ENCODE measurements at regions of chr9 and their contacts with region 1.

Region 1: GRCh38 chr9:32378993-32379729 is 5.3 kb upstream of the ACO1 start:
- DNase-seq: no peak
- ATAC-seq: peak; percentile 66
- H3K4me3 Mint-ChIP-seq: peak overlapping the region; percentile 30
- H3K27ac Mint-ChIP-seq: no peak overlapping the region
- H3K4me1 Mint-ChIP-seq: peaks cover 15% of the 10 kb centered on the region
- H3K27me3 Mint-ChIP-seq: peaks cover 31% of the 10 kb centered on the region
- CTCF ChIP-seq: peak; percentile 52; the same call in 1 of the 2 replicates

Region 2: GRCh38 chr9:32218100-32218767 is 160.9 kb before region 1 on chr9:
- CTCF ChIA-PET with region 1: no interaction called
- POLR2A ChIA-PET with region 1: no interaction called
- DNase-seq: no peak
- ATAC-seq: no peak
- H3K4me3 Mint-ChIP-seq: no peak overlapping the region
- H3K27ac Mint-ChIP-seq: 0 out of 2 replicates have a peak overlapping the region, but pooled peaks have one; percentile 0
- H3K4me1 Mint-ChIP-seq: peaks cover 29% of the 10 kb centered on the region
- H3K27me3 Mint-ChIP-seq: no peaks in the 10 kb centered on the region; the same call in none of the 2 replicates
- CTCF ChIP-seq: no peak

Region 3: DNA sequence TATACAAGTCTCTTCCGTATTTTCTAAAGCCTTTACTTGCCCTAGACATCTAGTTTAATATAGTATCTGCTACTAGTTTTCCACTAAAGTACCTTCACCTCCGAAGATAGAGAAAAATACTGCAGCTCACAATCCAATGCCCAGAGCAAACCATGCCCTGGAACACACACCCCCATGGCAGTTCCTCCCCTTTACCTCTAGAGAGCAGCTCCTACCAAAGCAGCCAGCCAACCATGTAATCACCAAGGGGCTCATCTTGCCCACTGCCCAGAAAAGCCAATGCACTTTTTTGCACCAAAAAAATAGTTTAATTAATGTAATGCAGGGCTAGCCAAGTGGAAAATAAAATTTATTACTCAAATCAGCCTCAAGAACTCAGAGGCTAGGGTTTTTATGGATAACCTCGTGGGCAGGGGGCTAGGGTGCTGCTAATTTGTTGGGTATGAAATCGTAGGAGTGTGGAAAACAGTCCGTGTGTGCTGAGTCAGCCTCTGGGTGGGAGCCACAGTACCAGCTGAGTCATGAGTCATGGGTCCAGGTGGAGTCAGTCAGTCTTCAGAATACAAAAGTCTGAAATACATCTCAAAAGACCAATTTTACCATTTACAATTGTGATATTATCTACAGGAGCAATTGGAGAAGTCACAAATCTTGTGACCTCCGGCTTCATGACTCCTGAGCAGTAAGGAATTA is 114.8 kb before region 1 on chr9:
- CTCF ChIA-PET with region 1: interaction called, 27 read pairs
- POLR2A ChIA-PET with region 1: no interaction called
- DNase-seq: peak; percentile 38
- ATAC-seq: peak; percentile 100
- H3K4me3 Mint-ChIP-seq: no peak overlapping the region
- H3K27ac Mint-ChIP-seq: peak overlapping the region; percentile 68; the same call in 1 of the 2 replicates
- H3K4me1 Mint-ChIP-seq: peaks cover 13% of the 10 kb centered on the region
- H3K27me3 Mint-ChIP-seq: no peaks in the 10 kb centered on the region; the same call in 1 of the 2 replicates
- CTCF ChIP-seq: 0 out of 2 replicates have a peak, but pooled peaks have one; percentile 19

Region 4: DNA sequence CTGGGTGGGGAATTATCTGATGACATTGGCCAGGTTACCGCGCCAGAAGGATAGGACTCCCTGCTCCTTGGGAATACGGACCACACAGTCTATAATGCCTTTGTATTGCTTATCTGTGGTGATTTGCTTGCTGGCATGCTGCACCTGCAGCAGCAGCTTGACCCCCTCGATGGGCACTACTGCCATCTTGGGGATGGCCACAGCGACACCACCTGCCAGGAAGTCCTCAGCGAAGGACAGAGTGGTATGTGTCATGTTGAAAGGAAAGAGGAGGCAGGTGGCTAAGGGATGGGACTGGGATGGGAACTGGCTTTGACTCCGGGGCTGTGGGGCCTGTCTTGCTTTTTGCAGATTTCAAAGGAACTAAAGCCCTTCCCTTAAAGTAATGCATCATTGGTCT is 45.1 kb before region 1 on chr9:
- CTCF ChIA-PET with region 1: no interaction called
- POLR2A ChIA-PET with region 1: no interaction called
- DNase-seq: peak; percentile 15
- ATAC-seq: peak; percentile 52
- H3K4me3 Mint-ChIP-seq: no peak overlapping the region
- H3K27ac Mint-ChIP-seq: no peak overlapping the region
- H3K4me1 Mint-ChIP-seq: peaks cover 18% of the 10 kb centered on the region
- H3K27me3 Mint-ChIP-seq: no peaks in the 10 kb centered on the region
- CTCF ChIP-seq: no peak

Region 5: DNA sequence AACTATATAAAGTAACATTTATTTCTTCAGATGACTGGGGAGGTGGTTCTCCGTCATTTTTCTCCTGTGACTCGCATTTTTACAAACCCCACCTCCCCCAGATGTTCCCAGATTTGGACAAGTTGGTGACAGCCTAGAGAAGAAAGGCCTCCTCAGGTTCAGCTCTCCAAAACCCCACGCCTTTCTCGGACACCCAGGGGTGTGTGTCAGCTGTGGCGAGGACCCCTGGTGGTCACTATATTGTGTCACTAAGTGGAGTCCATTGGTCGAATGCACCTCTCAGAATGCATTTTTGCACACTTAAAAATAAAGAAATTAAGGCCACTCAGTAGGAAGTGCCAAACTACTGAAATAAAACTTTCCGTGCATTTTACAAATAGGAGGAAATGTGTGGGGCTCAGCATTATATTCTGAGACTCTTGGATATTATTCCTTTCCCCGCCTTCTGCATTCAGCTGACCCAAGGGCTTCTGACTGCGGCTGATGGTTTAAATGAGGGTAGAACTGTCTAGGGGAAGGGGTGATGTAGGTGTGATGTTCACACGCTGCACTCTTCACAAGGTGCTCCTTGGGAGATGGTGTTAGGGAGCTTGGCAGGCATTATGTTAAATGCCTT is 52.9 kb after region 1 on chr9:
- CTCF ChIA-PET with region 1: interaction called, 56 read pairs
- POLR2A ChIA-PET with region 1: no interaction called
- DNase-seq: peak; percentile 51
- ATAC-seq: peak; percentile 81
- H3K4me3 Mint-ChIP-seq: no peak overlapping the region
- H3K27ac Mint-ChIP-seq: no peak overlapping the region
- H3K4me1 Mint-ChIP-seq: no peaks in the 10 kb centered on the region
- H3K27me3 Mint-ChIP-seq: no peaks in the 10 kb centered on the region
- CTCF ChIP-seq: peak; percentile 65

Region 6: DNA sequence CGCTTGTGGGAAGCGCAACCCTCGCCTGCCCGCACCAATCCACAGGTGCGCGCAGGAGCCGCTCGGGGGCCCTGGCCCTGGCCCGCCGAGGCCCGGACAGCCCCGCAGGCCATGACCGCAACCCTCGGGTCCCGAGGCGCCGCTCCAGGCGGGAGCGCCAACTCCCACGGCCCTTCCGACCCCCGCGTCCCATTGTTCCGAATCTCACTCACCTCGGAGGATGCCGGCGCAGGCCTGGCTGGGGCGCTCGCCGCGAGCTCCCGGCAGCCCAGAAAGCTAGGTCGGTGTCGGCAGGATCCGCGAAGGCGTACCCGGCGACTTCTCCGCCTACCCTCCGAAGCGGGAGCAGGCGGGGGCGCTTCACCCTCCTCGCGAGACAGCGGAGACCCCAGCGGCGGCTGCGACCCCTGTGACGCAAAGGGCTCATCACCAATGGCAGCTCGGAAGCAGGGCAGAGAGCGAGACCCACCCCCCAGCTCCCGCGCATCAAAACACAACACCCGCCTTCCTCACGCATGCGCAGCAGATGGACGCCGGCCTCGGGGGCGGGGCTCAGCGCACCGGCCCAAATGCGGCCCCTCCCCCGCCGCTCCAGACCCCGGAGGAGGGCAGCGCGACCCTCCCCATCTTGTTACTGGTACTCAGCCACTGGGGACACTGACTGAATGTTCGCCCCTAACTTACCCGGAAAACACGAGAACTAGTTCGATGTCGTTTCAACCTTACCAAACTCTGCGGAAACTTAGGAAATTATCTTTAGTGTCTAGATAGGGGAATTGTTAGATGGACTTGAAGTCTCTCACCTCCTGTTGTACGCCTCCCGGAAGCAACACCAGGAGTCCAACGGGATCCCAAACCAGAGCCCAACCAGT is 171.6 kb after region 1 on chr9:
- CTCF ChIA-PET with region 1: interaction called, 49 read pairs
- POLR2A ChIA-PET with region 1: interaction called, 7 read pairs
- DNase-seq: peak; percentile 98
- ATAC-seq: peak; percentile 90
- H3K4me3 Mint-ChIP-seq: peak overlapping the region; percentile 91
- H3K27ac Mint-ChIP-seq: peak overlapping the region; percentile 98
- H3K4me1 Mint-ChIP-seq: peaks cover 24% of the 10 kb centered on the region
- H3K27me3 Mint-ChIP-seq: no peaks in the 10 kb centered on the region
- CTCF ChIP-seq: no peak

Region 7: DNA sequence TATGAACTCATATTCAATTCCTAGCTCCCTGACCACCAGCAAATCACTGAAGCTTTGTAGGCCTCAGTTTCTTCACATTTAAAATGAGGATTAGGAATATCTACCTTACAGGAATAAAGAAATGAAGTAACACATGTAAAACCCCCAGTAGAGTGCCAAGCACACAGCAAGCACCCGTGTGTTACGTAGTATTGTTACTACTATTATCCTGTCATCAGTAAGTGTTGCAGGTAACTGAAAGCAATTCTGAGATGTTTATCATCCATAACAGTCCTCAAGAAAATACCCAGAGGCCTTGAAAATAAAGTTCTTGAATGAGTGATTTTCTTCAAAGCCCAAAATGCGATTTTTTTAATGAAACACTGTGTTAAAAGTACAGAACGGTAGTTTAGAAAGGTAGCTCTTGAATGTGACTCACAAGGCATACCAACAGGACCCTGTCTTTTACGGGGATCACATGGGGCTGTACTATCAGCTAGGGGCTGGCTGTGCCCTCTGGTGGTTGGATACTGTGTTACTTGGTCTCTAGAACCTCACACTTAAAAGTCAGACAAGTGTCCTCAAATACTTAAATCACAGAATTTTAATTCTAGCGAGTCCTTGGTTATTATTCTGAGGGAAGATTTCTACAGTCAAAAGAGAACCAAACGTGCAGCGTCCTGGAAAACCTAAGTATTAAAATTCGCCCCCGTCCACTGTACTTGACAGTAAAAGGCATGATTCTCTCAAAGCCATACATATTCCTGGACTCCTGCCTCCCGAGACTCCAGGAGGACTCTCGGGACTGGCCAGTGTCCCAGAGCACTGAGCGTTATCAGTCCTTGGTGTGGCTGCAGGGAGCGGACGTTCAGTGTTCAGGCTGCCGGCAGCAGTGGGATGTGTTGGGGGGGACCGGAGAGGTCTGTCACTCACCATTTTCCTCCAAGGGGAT is 193.1 kb after region 1 on chr9:
- CTCF ChIA-PET with region 1: interaction called, 245 read pairs
- POLR2A ChIA-PET with region 1: interaction called, 5 read pairs
- DNase-seq: peak; percentile 68
- ATAC-seq: peak; percentile 89
- H3K4me3 Mint-ChIP-seq: peak overlapping the region; percentile 99
- H3K27ac Mint-ChIP-seq: peak overlapping the region; percentile 99
- H3K4me1 Mint-ChIP-seq: peaks cover 11% of the 10 kb centered on the region
- H3K27me3 Mint-ChIP-seq: no peaks in the 10 kb centered on the region
- CTCF ChIP-seq: peak; percentile 18; the same call in 1 of the 2 replicates

Region 8: DNA sequence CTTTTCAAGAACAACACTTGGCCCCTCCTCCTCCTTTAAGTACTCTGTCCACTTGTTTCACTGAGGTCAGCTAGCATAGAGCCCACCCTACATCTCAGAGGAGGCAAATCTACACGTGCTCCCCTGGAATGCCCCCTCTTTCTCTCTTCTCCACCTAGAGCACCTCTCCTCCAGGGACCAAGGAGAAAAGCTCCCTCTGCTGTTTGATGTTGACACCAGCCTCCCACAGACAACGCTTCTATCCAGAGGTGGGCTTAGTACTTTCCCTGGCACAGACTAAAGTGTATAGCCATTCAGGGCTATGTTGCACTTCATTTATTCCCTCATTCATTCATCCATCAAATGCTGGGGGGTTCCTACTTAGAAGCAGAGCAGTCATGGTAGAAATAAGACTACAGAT is 324.5 kb after region 1 on chr9:
- CTCF ChIA-PET with region 1: interaction called, 11 read pairs
- POLR2A ChIA-PET with region 1: no interaction called
- DNase-seq: peak; percentile 19
- ATAC-seq: peak; percentile 84
- H3K4me3 Mint-ChIP-seq: no peak overlapping the region
- H3K27ac Mint-ChIP-seq: no peak overlapping the region
- H3K4me1 Mint-ChIP-seq: peaks cover 5% of the 10 kb centered on the region
- H3K27me3 Mint-ChIP-seq: peaks cover 19% of the 10 kb centered on the region
- CTCF ChIP-seq: no peak

Measured in WTC11 (cell line).